ENCODE measurements at regions of chr1 and their contacts with region 1.

Region 1: GRCh38 chr1:212455803-212456528 is 23.2 kb downstream of the NENF start:
- H3K4me3 ChIP-seq: no peak overlapping the region
- H3K27ac ChIP-seq: no peak overlapping the region
- H3K4me1 ChIP-seq: no peaks in the 10 kb centered on the region
- CTCF ChIP-seq: peak; percentile 78

Region 2: GRCh38 chr1:211675230-211676105 is 780.5 kb before region 1 on chr1 and contains the start of gene NEK2:
- CTCF ChIA-PET with region 1: interaction called, 49 read pairs
- POLR2A ChIA-PET with region 1: interaction called, 8 read pairs
- H3K4me3 ChIP-seq: peak within 1 kb of the TSS; percentile 73
- H3K27ac ChIP-seq: peak within 1 kb of the TSS; percentile 40; the same call in 1 of the 2 replicates
- H3K4me1 ChIP-seq: peaks cover 3% of the 10 kb centered on the region; the same call in 1 of the 2 replicates
- CTCF ChIP-seq: peak; percentile 28; the same call in 1 of the 2 replicates

Region 3: DNA sequence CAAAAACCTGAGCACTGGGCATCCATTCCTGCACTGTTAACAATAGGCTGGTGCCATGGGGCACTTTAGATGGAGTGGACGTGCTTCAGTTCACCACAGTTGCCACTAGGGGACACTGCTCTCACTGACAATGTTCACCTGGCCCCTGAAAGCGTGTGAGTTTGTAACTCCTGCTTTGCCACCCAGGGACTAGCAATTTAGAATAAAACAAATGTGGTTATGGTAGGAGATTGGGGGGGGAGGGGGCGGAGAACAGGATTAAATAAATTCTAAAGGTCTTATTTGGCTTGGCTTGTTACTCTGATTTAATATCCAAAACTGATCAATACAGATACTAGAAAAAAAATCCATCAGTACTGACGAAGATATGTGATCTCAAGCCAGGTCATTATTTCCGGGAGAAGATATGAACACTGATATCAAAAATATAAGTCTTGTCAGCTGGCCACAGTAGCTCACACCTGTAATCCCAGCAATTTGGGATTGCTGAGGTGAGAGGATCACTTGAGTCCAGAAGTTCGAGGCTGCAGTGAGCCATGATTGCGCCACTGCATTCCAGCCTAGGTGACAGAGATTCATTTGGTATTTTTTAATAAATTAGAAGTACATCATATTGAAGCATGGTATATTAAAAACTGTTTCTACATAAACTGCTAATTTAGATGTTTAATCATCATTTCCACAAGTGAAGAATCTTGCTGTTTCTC is 443.8 kb before region 1 on chr1:
- CTCF ChIA-PET with region 1: interaction called, 12 read pairs
- POLR2A ChIA-PET with region 1: no interaction called
- H3K4me3 ChIP-seq: no peak overlapping the region
- H3K27ac ChIP-seq: no peak overlapping the region
- H3K4me1 ChIP-seq: no peaks in the 10 kb centered on the region
- CTCF ChIP-seq: peak; percentile 59

Region 4: DNA sequence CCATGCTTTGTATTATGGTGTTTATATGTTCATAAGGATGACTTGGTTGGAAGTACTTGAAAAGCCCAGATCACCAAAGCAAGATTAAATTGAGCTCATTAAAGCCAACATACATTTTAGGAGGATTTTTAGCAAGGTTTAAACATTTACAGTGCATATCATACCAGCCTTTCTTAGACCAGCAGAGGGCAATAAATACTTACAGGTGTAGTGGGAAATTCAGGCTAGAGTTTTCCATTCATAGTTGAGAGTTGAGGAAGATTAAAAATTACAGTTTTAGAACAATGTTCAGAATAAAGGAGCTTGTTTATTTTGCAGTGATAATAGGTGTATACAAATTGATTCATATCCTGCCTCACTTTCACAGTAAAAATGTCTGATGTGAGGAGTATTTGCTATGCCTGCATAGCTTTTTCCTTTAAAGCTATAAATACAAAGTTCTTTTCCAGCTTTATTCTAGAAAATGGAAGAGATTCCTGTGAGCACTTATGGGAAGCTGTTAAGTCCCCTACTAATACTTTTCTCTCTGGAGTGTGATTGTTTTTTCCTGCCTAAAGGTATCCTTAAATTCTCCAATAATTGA is 385.2 kb before region 1 on chr1:
- CTCF ChIA-PET with region 1: interaction called, 41 read pairs
- POLR2A ChIA-PET with region 1: no interaction called
- H3K4me3 ChIP-seq: no peak overlapping the region
- H3K27ac ChIP-seq: no peak overlapping the region
- H3K4me1 ChIP-seq: no peaks in the 10 kb centered on the region
- CTCF ChIP-seq: peak; percentile 29; the same call in 1 of the 2 replicates

Region 5: DNA sequence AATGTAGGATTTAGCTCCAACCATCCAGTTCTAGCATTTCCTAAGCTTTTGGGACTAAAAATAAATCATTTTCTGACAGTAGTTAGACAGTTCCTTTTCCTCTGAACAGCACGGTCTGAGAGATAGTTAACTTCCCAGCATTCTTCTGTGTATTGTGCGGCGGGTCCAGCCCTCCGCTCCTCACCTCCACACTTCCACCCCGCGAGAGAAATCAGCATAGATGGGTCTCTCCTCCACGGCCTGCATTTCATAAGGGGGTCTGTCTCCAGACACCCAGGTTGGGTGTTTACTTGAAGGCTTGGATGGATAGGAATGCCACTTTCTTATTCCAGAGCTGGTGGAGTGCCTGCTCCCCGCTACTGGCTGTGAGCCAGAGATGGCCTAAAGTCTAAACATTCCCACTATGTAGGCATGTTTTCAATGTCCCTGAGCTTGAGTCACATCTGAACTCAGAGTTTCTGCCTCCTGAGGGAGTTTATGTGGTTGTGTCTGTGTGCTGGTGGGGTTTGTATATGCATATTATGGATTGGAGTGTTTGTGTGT is 208.7 kb before region 1 on chr1:
- CTCF ChIA-PET with region 1: no interaction called
- POLR2A ChIA-PET with region 1: no interaction called
- H3K4me3 ChIP-seq: no peak overlapping the region
- H3K27ac ChIP-seq: no peak overlapping the region
- H3K4me1 ChIP-seq: no peaks in the 10 kb centered on the region
- CTCF ChIP-seq: no peak

Region 6: GRCh38 chr1:212440419-212440818 is 15.5 kb before region 1 on chr1:
- CTCF ChIA-PET with region 1: interaction called, 25 read pairs
- POLR2A ChIA-PET with region 1: interaction called, 3 read pairs
- H3K4me3 ChIP-seq: no peak overlapping the region
- H3K27ac ChIP-seq: no peak overlapping the region
- H3K4me1 ChIP-seq: no peaks in the 10 kb centered on the region
- CTCF ChIP-seq: no peak

Region 7: GRCh38 chr1:212514056-212514614 is 58.2 kb after region 1 on chr1:
- CTCF ChIA-PET with region 1: no interaction called
- POLR2A ChIA-PET with region 1: no interaction called
- H3K4me3 ChIP-seq: no peak overlapping the region
- H3K27ac ChIP-seq: no peak overlapping the region
- H3K4me1 ChIP-seq: no peaks in the 10 kb centered on the region
- CTCF ChIP-seq: no peak

Region 8: GRCh38 chr1:212595787-212596714 is 140.1 kb after region 1 on chr1:
- CTCF ChIA-PET with region 1: interaction called, 15 read pairs
- POLR2A ChIA-PET with region 1: no interaction called
- H3K4me3 ChIP-seq: peak overlapping the region; percentile 3; the same call in 1 of the 2 replicates
- H3K27ac ChIP-seq: peak overlapping the region; percentile 42; the same call in 1 of the 2 replicates
- H3K4me1 ChIP-seq: no peaks in the 10 kb centered on the region; the same call in 1 of the 2 replicates
- CTCF ChIP-seq: no peak

Region 9: DNA sequence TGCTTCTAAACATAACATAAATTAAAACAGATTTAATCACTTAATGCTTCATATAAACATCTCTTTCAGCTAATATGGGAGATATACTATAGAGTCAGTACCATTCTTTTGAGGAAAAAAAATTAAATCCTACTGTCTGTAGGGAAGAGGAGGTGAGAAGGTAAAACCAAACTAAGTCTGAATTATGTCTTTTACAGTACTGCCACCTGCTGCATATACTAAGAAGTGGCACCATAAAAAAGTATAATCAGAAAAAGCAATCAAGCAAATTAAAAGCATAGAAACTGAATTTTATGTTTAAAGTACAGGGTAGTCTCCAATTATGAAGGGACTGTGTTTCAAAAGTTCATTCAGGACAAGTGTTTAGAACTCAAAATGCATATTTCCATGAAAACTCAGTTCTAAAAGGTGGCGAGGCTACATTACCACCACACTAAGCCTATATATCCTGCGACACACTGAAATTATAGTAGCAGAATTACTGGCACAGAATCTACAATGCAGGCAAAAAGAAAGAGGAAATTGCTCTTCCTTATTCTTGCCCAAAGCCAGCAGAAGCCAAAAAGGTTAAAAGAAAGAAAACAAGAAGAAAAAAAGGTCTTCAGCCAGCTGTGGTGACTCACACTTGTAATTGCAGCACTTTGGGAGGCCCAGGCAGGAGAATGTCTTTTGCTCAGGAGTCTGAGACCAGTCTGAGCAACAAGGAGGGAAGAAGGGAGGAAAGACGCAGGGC is 326.6 kb after region 1 on chr1:
- CTCF ChIA-PET with region 1: interaction called, 22 read pairs
- POLR2A ChIA-PET with region 1: no interaction called
- H3K4me3 ChIP-seq: no peak overlapping the region
- H3K27ac ChIP-seq: no peak overlapping the region
- H3K4me1 ChIP-seq: no peaks in the 10 kb centered on the region
- CTCF ChIP-seq: peak; percentile 57